ENCODE measurements at regions of chr17 and their contacts with region 1.

Region 1: GRCh38 chr17:40647624-40648383 is at the start of gene SMARCE1:
- DNase-seq: peak; percentile 63 to 81 (median 76)
- ATAC-seq: peak; percentile 87
- H3K4me3 ChIP-seq: peak within 1 kb of the TSS; percentile 89
- H3K4me3 Mint-ChIP-seq: peak within 1 kb of the TSS; percentile 86 to 99 (median 90)
- H3K27ac ChIP-seq: peak within 1 kb of the TSS; percentile 95
- H3K27ac Mint-ChIP-seq: peak within 1 kb of the TSS; percentile 86 to 100 (median 98)
- H3K4me1 ChIP-seq: peaks cover 11 to 33% of the 10 kb centered on the region in 2 donors
- H3K4me1 Mint-ChIP-seq: peaks cover 27 to 64% (median 46%) of the 10 kb centered on the region in 7 donors
- H3K27me3 ChIP-seq: no peaks in the 10 kb centered on the region
- H3K27me3 Mint-ChIP-seq: no peaks in the 10 kb centered on the region
- total RNA-seq, gene SMARCE1: 65.4 to 101 (median 79.2) TPM

Region 2: GRCh38 chr17:40632216-40632615 is 15.6 kb before region 1 on chr17:
- CTCF ChIA-PET with region 1: interaction called, 3 read pairs
- POLR2A ChIA-PET with region 1: interaction called, 4 read pairs
- intact Hi-C with region 1: loop called in 1 of 2 experiments (anchors 2 kb)
- DNase-seq: no peak
- ATAC-seq: no peak
- H3K4me3 ChIP-seq: no peak overlapping the region
- H3K4me3 Mint-ChIP-seq: no peak overlapping the region
- H3K27ac ChIP-seq: no peak overlapping the region
- H3K27ac Mint-ChIP-seq: peak overlapping the region in 1 of 9 donors; percentile 55
- H3K4me1 ChIP-seq: no peaks in the 10 kb centered on the region
- H3K4me1 Mint-ChIP-seq: peaks cover 0 to 9% (median under 1%) of the 10 kb centered on the region in 7 donors
- H3K27me3 ChIP-seq: no peaks in the 10 kb centered on the region
- H3K27me3 Mint-ChIP-seq: no peaks in the 10 kb centered on the region

Region 3: GRCh38 chr17:40818733-40819527 is 171.1 kb after region 1 on chr17:
- CTCF ChIA-PET with region 1: no interaction called
- POLR2A ChIA-PET with region 1: interaction called, 6 read pairs
- intact Hi-C with region 1: loop called (anchors 2 to 10 kb)
- DNase-seq: peak; percentile 74 to 89 (median 84)
- ATAC-seq: peak; percentile 92
- H3K4me3 ChIP-seq: peak overlapping the region; percentile 70
- H3K4me3 Mint-ChIP-seq: peak overlapping the region; percentile 84 to 98 (median 94)
- H3K27ac ChIP-seq: peak overlapping the region; percentile 76
- H3K27ac Mint-ChIP-seq: peak overlapping the region; percentile 93 to 99 (median 96)
- H3K4me1 ChIP-seq: peaks cover 9 to 13% of the 10 kb centered on the region in 2 donors
- H3K4me1 Mint-ChIP-seq: peaks cover 11 to 38% (median 31%) of the 10 kb centered on the region in 7 donors
- H3K27me3 ChIP-seq: no peaks in the 10 kb centered on the region
- H3K27me3 Mint-ChIP-seq: peaks cover 4 to 23% (median 16%) of the 10 kb centered on the region in 5 donors

Region 4: DNA sequence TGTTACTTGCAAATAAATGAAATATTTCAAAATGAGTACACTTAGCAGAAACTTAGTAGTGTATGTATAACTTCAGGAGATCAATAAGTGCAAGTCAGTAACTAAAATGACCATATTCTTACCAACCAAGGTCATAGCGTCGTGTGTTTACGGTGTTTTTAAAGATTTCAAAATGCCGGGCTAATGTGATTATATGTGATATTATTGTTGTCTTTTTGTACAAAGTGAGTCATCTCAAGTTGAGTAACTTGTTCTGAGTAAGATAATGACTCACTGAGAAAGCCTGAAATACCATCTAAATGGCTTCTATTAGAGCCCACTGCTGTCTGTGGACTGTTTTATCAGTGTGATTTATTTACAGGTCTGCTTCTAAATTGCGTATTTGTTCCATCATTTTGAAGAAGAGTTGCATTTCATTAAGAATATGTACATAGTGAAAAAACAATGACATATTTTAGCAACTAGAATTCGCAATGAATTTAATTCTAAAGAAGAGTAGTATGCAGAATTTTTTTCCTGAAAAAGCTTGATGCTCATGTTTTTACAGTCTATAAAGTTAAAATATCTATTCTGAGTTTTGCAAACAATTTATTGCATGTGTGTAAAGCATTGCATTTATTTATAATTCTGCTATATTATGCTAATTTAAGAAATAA is 206.5 kb after region 1 on chr17:
- CTCF ChIA-PET with region 1: no interaction called
- POLR2A ChIA-PET with region 1: no interaction called
- intact Hi-C with region 1: no loop called
- DNase-seq: no peak
- ATAC-seq: no peak
- H3K4me3 ChIP-seq: no peak overlapping the region
- H3K4me3 Mint-ChIP-seq: no peak overlapping the region
- H3K27ac ChIP-seq: no peak overlapping the region
- H3K27ac Mint-ChIP-seq: no peak overlapping the region
- H3K4me1 ChIP-seq: no peaks in the 10 kb centered on the region
- H3K4me1 Mint-ChIP-seq: peaks cover 0 to 6% (median 0%) of the 10 kb centered on the region in 7 donors
- H3K27me3 ChIP-seq: no peaks in the 10 kb centered on the region
- H3K27me3 Mint-ChIP-seq: peaks cover 19 to 53% (median 27%) of the 10 kb centered on the region in 5 donors